Endothelial cell of umbilical vein (primary cell): ENCODE measurements at regions of chr4 and their contacts with region 1.

Region 1: GRCh38 chr4:183118585-183118984 is 19.5 kb downstream of the WWC2 start:
- DNase-seq: peak; percentile 73
- H3K4me3 ChIP-seq: no peak overlapping the region
- H3K27ac ChIP-seq: peak overlapping the region; percentile 73
- H3K4me1 ChIP-seq: peaks cover 16% of the 10 kb centered on the region
- H3K27me3 ChIP-seq: no peaks in the 10 kb centered on the region
- CTCF ChIP-seq: no peak
- POLR2A ChIP-seq: no peak

Region 2: GRCh38 chr4:183140911-183141320 is 22.3 kb after region 1 on chr4:
- CTCF ChIA-PET with region 1: no interaction called
- POLR2A ChIA-PET with region 1: no interaction called
- dilution Hi-C with region 1: no loop called
- intact Hi-C with region 1: no loop called
- DNase-seq: peak; percentile 26
- H3K4me3 ChIP-seq: no peak overlapping the region
- H3K27ac ChIP-seq: no peak overlapping the region
- H3K4me1 ChIP-seq: peaks cover 18% of the 10 kb centered on the region
- H3K27me3 ChIP-seq: no peaks in the 10 kb centered on the region
- CTCF ChIP-seq: no peak
- POLR2A ChIP-seq: no peak

Region 3: GRCh38 chr4:183175631-183176232 is 57.1 kb after region 1 on chr4:
- CTCF ChIA-PET with region 1: interaction called, 3 read pairs
- POLR2A ChIA-PET with region 1: no interaction called
- dilution Hi-C with region 1: no loop called
- intact Hi-C with region 1: loop called (anchors 2 kb)
- DNase-seq: peak; percentile 68
- H3K4me3 ChIP-seq: no peak overlapping the region
- H3K27ac ChIP-seq: peak overlapping the region; percentile 25
- H3K4me1 ChIP-seq: peaks cover 37% of the 10 kb centered on the region
- H3K27me3 ChIP-seq: no peaks in the 10 kb centered on the region
- CTCF ChIP-seq: no peak
- POLR2A ChIP-seq: no peak